Ovary (tissue), 10 donors: ENCODE measurements at regions of chr12 and their contacts with region 1.

Region 1: DNA sequence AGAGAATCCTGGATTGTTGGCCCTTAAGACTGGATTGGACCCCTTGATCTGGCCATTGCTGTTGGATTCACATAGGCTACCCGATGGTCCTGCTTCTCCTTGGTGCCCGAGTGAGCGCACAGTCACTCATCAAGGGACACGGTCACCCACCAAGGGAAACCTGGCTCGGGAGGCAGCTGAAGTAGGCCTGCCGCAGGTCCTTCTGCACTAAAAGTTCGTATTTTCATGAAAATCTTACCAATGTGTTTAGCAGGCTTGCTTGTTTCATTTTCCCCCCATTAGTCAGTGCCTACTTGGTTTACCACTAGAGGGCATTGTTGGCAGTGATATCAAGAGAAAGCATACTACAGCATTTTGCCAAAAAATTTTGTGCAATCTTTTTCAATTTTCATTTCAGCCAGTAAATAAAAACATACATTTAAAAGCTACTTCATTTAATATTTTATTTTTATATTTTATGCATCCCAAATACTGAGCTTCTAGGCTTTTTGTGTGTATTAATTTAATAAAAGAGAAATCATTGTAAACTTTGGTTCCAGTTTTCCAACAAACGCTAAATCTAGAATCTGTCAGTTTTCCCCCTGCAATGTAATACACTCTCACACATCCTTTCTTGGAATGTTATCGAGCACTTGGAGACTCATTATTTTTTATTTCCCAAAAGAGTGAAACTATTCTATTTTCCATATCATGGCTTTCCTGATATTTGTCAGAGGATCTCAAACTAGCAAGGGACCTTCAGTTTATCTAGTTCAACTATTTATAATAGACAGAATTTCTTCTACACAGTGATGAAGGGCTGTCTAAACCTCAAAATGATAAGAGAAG is 116.7 kb downstream of the LMNTD1 start:
- DNase-seq: peak; percentile 8 to 43 (median 32)
- H3K4me3 ChIP-seq: no peak overlapping the region
- H3K27ac ChIP-seq: no peak overlapping the region
- H3K4me1 ChIP-seq: peaks cover 2% of the 10 kb centered on the region
- H3K27me3 ChIP-seq: no peaks in the 10 kb centered on the region
- CTCF ChIP-seq: peak; percentile 59 to 64 (median 59)
- EP300 ChIP-seq: no peak
- POLR2A ChIP-seq: no peak

Region 2: DNA sequence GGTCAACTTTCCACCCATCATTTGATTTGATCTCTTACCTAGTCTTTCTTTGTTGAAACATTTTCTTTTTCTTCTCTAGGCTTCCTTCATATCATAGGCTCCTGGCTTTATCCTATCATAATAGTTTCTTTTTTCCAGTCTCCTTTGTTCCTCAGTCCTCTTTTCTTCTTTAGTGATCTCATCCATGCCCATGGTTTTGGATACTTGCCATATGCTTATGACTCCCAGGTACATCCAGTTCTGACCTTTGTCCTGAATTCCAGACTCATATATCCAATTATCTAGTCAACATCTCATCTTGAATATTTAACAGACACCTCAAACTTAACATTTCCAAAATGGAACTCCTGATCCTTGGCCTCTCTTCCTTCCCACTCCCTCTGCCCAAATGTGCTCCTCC is 149.6 kb before region 1 on chr12:
- intact Hi-C with region 1: no loop called
- DNase-seq: no peak
- H3K4me3 ChIP-seq: no peak overlapping the region
- H3K27ac ChIP-seq: no peak overlapping the region
- H3K4me1 ChIP-seq: peaks cover 3% of the 10 kb centered on the region
- H3K27me3 ChIP-seq: no peaks in the 10 kb centered on the region
- CTCF ChIP-seq: no peak
- EP300 ChIP-seq: no peak
- POLR2A ChIP-seq: no peak

Region 3: DNA sequence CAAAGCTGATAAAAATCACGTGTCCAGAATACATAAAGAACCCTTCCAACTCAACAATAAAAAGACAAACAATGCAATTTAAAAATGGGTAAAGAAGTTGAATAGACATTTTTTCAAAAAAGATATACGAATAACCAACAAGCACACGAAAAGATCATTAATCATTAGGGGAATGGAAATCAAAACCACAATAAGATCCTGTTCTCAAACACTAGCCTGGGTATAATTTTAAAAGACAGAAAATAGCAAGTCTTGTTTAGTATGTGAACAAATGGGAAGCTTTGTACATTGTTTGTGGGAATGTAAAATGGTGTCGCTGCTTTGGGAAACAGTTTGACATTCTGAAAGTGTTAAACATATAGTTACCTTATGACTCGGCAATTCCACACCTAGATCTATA is 203.0 kb after region 1 on chr12:
- intact Hi-C with region 1: no loop called
- DNase-seq: no peak
- H3K4me3 ChIP-seq: no peak overlapping the region
- H3K27ac ChIP-seq: no peak overlapping the region
- H3K4me1 ChIP-seq: no peaks in the 10 kb centered on the region
- H3K27me3 ChIP-seq: no peaks in the 10 kb centered on the region
- CTCF ChIP-seq: no peak
- EP300 ChIP-seq: no peak
- POLR2A ChIP-seq: no peak

Region 4: GRCh38 chr12:25970916-25971653 is 534.7 kb after region 1 on chr12:
- intact Hi-C with region 1: no loop called
- DNase-seq: peak in 1 of 5 donors; percentile 42
- H3K4me3 ChIP-seq: no peak overlapping the region
- H3K27ac ChIP-seq: no peak overlapping the region
- H3K4me1 ChIP-seq: peaks cover 17% of the 10 kb centered on the region
- H3K27me3 ChIP-seq: no peaks in the 10 kb centered on the region
- CTCF ChIP-seq: no peak
- EP300 ChIP-seq: no peak
- POLR2A ChIP-seq: no peak

Region 5: GRCh38 chr12:26028953-26029735 is 592.7 kb after region 1 on chr12:
- intact Hi-C with region 1: loop called in 1 of 4 experiments (anchors 10 kb)
- DNase-seq: peak in 1 of 5 donors; percentile 52
- H3K4me3 ChIP-seq: no peak overlapping the region
- H3K27ac ChIP-seq: no peak overlapping the region
- H3K4me1 ChIP-seq: peaks cover 6% of the 10 kb centered on the region
- H3K27me3 ChIP-seq: no peaks in the 10 kb centered on the region
- CTCF ChIP-seq: peak; percentile 56 to 75 (median 67)
- EP300 ChIP-seq: no peak
- POLR2A ChIP-seq: no peak

Region 6: GRCh38 chr12:26088993-26089392 is 652.6 kb after region 1 on chr12:
- intact Hi-C with region 1: loop called in 2 of 4 experiments (anchors 10 kb)
- DNase-seq: no peak
- H3K4me3 ChIP-seq: no peak overlapping the region
- H3K27ac ChIP-seq: no peak overlapping the region
- H3K4me1 ChIP-seq: no peaks in the 10 kb centered on the region
- H3K27me3 ChIP-seq: no peaks in the 10 kb centered on the region
- CTCF ChIP-seq: no peak
- EP300 ChIP-seq: no peak
- POLR2A ChIP-seq: no peak

Region 7: GRCh38 chr12:26097046-26097878 is 660.8 kb after region 1 on chr12:
- intact Hi-C with region 1: loop called in 1 of 4 experiments (anchors 10 kb)
- DNase-seq: peak; percentile 66 to 79 (median 77)
- H3K4me3 ChIP-seq: no peak overlapping the region
- H3K27ac ChIP-seq: no peak overlapping the region
- H3K4me1 ChIP-seq: no peaks in the 10 kb centered on the region
- H3K27me3 ChIP-seq: no peaks in the 10 kb centered on the region
- CTCF ChIP-seq: peak; percentile 76 to 88 (median 87)
- EP300 ChIP-seq: no peak
- POLR2A ChIP-seq: no peak